ENCODE measurements at regions of chr17 and their contacts with region 1.

Region 1: GRCh38 chr17:58046239-58047094 is 36.8 kb upstream of the DYNLL2 start:
- DNase-seq: no peak
- ATAC-seq: peak; percentile 42; the same call in 2 of the 3 replicates
- H3K4me3 ChIP-seq: no peak overlapping the region
- H3K27ac ChIP-seq: no peak overlapping the region
- H3K4me1 ChIP-seq: 0 out of 2 replicates have a peak, but pooled peaks cover 6% of the 10 kb centered on the region
- H3K27me3 ChIP-seq: peaks cover 0 to 46% of the 10 kb centered on the region in 2 experiments; a peak in 2 of 5 replicates
- CTCF ChIP-seq: no peak
- EP300 ChIP-seq: no peak
- POLR2A ChIP-seq: no peak
- RAD21 ChIP-seq: no peak

Region 2: GRCh38 chr17:58452521-58453137 is 406.2 kb after region 1 on chr17:
- CTCF ChIA-PET with region 1: no interaction called
- POLR2A ChIA-PET with region 1: no interaction called
- in situ Hi-C with region 1: loop called (anchors 25 kb)
- intact Hi-C with region 1: no loop called
- DNase-seq: no peak
- ATAC-seq: no peak
- H3K4me3 ChIP-seq: no peak overlapping the region
- H3K27ac ChIP-seq: no peak overlapping the region
- H3K4me1 ChIP-seq: peaks cover 27% of the 10 kb centered on the region; the same call in 1 of the 2 replicates
- H3K27me3 ChIP-seq: no peaks in the 10 kb centered on the region
- CTCF ChIP-seq: no peak
- EP300 ChIP-seq: no peak
- POLR2A ChIP-seq: no peak
- RAD21 ChIP-seq: no peak